Heart left ventricle (tissue), 16 donors: ENCODE measurements at regions of chr9 and their contacts with region 1.

Region 1: DNA sequence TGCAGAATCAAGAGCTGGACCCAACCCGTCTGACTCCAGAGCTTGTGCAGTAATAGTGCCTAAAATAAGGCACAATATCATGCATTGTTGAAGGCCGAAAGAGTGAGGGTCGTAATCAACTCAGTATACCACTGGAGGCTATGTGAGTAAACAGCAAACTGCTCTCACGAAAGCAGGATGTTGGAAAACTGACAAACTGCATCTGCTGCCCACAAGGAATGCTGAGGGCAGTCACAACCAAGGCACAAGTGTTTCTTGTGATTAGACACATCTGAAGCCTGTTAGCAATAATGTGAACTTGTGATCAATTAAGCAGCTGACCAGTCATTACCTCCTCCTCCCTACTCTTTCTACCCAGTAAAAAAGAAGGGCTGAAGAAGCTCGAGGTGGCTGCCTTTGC is 48.8 kb downstream of the TRPM3 start:
- DNase-seq: no peak
- ATAC-seq: no peak
- H3K4me3 ChIP-seq: no peak overlapping the region
- H3K27ac ChIP-seq: no peak overlapping the region
- H3K4me1 ChIP-seq: no peaks in the 10 kb centered on the region
- H3K27me3 ChIP-seq: no peaks in the 10 kb centered on the region
- CTCF ChIP-seq: no peak
- POLR2A ChIP-seq: no peak

Region 2: GRCh38 chr9:70772601-70773000 is 300.0 kb before region 1 on chr9:
- intact Hi-C with region 1: no loop called
- DNase-seq: no peak
- ATAC-seq: no peak
- H3K4me3 ChIP-seq: no peak overlapping the region
- H3K27ac ChIP-seq: no peak overlapping the region
- H3K4me1 ChIP-seq: no peaks in the 10 kb centered on the region
- H3K27me3 ChIP-seq: no peaks in the 10 kb centered on the region
- CTCF ChIP-seq: no peak
- POLR2A ChIP-seq: no peak

Region 3: GRCh38 chr9:71025201-71025600 is 47.4 kb before region 1 on chr9:
- intact Hi-C with region 1: loop called in 1 of 10 experiments (anchors 5 kb)
- DNase-seq: no peak
- ATAC-seq: no peak
- H3K4me3 ChIP-seq: no peak overlapping the region
- H3K27ac ChIP-seq: no peak overlapping the region
- H3K4me1 ChIP-seq: no peaks in the 10 kb centered on the region
- H3K27me3 ChIP-seq: no peaks in the 10 kb centered on the region
- CTCF ChIP-seq: no peak
- POLR2A ChIP-seq: no peak